Activated CD4-positive, alpha-beta T cell treated with anti-CD3 and anti-CD28 coated beads for 36 hours (primary cell): ENCODE measurements at regions of chrX and their contacts with region 1.

Region 1: DNA sequence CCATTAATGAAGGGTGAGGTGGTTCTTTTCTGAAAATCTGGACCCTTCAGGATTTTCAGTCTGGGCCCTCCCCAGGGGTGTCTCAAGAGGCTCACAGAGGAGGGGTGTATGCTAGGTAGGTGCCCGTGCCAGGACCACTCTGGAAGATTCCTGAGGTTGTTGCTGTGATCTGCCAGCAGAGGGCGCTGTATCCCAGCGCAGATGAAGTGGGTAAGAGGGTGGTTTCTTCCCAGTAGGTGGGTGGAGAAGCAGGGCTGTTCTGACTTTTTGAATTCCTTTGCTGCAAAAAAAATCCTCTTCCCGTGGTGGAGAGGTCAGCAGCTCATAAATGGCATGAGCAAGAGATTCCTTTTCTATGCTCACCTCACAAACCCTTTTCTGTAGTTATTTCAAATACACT is 51.1 kb downstream of the SCML1 start:
- DNase-seq: peak; percentile 59
- ATAC-seq: peak; percentile 71
- H3K4me3 Mint-ChIP-seq: no peak overlapping the region
- H3K27ac Mint-ChIP-seq: no peak overlapping the region
- H3K4me1 Mint-ChIP-seq: peaks cover 18% of the 10 kb centered on the region
- H3K27me3 Mint-ChIP-seq: no peaks in the 10 kb centered on the region

Region 2: DNA sequence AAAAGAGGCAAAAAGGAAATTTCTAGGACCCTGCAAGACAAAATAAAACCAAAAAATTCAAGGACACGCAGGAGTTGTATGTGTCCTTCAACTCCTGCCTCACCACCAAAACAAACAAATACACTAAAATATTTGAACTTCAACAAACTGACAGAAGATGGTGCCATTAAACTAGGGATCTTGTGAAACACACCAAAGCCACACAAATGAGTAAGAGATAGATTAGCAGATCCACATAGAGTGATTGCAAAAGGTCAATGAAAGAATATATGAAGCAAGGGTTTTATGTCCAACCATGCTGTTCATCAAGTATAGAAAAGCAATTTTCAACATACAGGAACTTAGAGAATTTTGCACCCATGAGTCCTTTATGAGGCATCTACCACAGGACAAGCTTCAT is 91.2 kb before region 1 on chrX:
- CTCF ChIA-PET with region 1: no interaction called
- POLR2A ChIA-PET with region 1: no interaction called
- intact Hi-C with region 1: loop called in 1 of 2 experiments (anchors 1 kb)
- DNase-seq: no peak
- ATAC-seq: peak; percentile 26
- H3K4me3 Mint-ChIP-seq: no peak overlapping the region
- H3K27ac Mint-ChIP-seq: no peak overlapping the region
- H3K4me1 Mint-ChIP-seq: no peaks in the 10 kb centered on the region
- H3K27me3 Mint-ChIP-seq: no peaks in the 10 kb centered on the region